Caco-2 (cell line): ENCODE measurements at regions of chr14 and their contacts with region 1.

Region 1: DNA sequence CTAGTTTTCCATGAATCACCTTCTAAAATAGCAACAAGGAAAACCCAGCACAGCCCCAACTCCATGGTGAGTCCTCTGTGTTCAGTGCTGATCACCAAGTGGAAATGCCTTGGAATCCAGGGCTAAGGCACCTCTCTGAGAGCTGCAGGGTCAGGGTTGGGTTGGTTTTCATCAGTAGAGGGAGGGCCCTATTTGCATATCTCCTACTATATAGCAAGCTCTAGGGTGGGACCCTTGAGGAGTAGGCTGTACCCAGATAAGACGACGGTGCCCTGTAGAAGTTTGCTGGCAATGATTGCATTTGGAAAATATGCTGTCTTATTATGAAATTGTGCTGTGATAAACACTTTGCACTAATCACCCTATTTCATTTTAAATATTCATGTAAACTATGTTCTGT is 1011.8 kb downstream of the TMEM121 start:
- DNase-seq: no peak
- H3K4me3 ChIP-seq: no peak overlapping the region
- H3K4me3 Mint-ChIP-seq: no peak overlapping the region
- H3K27ac Mint-ChIP-seq: no peak overlapping the region
- H3K4me1 ChIP-seq: no peaks in the 10 kb centered on the region
- H3K4me1 Mint-ChIP-seq: no peaks in the 10 kb centered on the region
- H3K27me3 ChIP-seq: no peaks in the 10 kb centered on the region
- H3K27me3 Mint-ChIP-seq: peaks cover 7% of the 10 kb centered on the region
- CTCF ChIP-seq: no peak

Region 2: GRCh38 chr14:105999361-106000028 is 538.7 kb before region 1 on chr14:
- CTCF ChIA-PET with region 1: no interaction called
- POLR2A ChIA-PET with region 1: no interaction called
- intact Hi-C with region 1: no loop called
- DNase-seq: no peak
- H3K4me3 ChIP-seq: no peak overlapping the region
- H3K4me3 Mint-ChIP-seq: no peak overlapping the region
- H3K27ac Mint-ChIP-seq: no peak overlapping the region
- H3K4me1 ChIP-seq: no peaks in the 10 kb centered on the region
- H3K4me1 Mint-ChIP-seq: no peaks in the 10 kb centered on the region
- H3K27me3 ChIP-seq: no peaks in the 10 kb centered on the region
- H3K27me3 Mint-ChIP-seq: peaks cover 2% of the 10 kb centered on the region
- CTCF ChIP-seq: peak in 1 of 2 experiments; percentile 40

Region 3: DNA sequence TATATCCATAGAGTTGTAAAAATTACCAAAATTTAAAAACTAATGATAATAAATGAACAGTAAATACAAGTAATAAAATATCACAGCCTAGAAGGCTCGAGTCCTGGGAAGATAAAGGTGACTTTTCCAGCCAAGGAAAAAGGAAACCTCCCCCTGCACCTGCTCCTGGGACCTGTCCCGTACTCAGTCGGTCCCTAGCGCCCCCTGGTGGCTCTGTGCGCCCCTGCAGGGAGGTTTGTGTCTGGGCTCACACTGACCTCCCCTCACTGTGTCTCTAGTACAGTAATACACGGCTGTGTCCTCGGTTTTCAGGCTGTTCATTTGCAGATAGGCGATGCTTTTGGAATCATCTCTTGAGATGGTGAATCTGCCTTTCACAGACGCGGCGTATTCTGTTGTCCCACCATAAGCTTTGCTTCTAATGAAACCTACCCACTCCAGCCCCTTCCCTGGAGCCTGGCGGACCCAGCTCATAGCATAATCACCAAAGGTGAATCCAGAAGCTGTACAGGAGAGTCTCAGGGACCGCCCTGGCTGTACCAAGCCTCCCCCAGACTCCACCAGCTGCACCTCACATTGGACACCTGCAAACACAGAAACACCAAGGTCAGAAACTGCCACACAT is 18.6 kb after region 1 on chr14:
- CTCF ChIA-PET with region 1: no interaction called
- POLR2A ChIA-PET with region 1: no interaction called
- intact Hi-C with region 1: loop called (anchors 1 kb)
- DNase-seq: peak; percentile 72 to 82
- H3K4me3 ChIP-seq: no peak overlapping the region
- H3K4me3 Mint-ChIP-seq: no peak overlapping the region
- H3K27ac Mint-ChIP-seq: no peak overlapping the region
- H3K4me1 ChIP-seq: no peaks in the 10 kb centered on the region
- H3K4me1 Mint-ChIP-seq: no peaks in the 10 kb centered on the region
- H3K27me3 ChIP-seq: no peaks in the 10 kb centered on the region
- H3K27me3 Mint-ChIP-seq: no peaks in the 10 kb centered on the region
- CTCF ChIP-seq: peak; percentile 58 to 74